ENCODE measurements at regions of chr3 and their contacts with region 1.

Region 1: DNA sequence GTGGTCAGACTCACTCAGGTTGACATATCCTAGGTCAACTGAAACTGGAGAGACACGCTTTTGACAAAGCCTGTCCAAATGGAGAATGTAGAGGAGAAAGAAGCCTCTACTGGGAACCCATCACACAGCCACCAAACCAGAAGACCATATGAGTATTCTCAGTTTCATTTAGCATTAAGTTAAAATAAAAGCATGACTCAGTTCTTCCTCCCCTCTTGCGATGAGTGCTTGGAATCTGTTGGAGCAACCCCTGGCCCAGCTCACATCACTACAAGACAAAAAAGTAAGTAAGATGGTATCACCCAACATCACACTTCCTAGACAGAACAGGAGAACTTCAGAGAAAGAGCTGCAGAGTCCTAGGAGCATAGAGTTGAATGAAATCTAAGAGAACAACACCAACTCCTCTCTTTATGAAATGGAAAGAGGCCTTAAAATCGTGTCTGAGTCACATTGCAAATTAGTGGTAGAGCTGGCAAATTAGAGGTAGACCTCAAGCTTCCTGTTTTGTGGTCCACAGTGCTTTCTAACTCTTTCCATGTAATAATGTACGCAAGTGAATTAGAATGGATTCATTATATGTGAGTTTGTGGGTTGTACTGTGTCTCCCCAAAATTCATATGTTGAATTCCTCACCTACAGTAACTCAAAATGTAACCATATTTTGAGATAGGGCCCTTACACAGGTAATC is 51.2 kb downstream of the FGF12 start:
- DNase-seq: peak; percentile 57
- H3K4me3 Mint-ChIP-seq: peak overlapping the region; percentile 36
- H3K27ac Mint-ChIP-seq: peak overlapping the region; percentile 94
- H3K4me1 Mint-ChIP-seq: peaks cover 7% of the 10 kb centered on the region
- H3K27me3 Mint-ChIP-seq: peaks cover 14% of the 10 kb centered on the region

Region 2: DNA sequence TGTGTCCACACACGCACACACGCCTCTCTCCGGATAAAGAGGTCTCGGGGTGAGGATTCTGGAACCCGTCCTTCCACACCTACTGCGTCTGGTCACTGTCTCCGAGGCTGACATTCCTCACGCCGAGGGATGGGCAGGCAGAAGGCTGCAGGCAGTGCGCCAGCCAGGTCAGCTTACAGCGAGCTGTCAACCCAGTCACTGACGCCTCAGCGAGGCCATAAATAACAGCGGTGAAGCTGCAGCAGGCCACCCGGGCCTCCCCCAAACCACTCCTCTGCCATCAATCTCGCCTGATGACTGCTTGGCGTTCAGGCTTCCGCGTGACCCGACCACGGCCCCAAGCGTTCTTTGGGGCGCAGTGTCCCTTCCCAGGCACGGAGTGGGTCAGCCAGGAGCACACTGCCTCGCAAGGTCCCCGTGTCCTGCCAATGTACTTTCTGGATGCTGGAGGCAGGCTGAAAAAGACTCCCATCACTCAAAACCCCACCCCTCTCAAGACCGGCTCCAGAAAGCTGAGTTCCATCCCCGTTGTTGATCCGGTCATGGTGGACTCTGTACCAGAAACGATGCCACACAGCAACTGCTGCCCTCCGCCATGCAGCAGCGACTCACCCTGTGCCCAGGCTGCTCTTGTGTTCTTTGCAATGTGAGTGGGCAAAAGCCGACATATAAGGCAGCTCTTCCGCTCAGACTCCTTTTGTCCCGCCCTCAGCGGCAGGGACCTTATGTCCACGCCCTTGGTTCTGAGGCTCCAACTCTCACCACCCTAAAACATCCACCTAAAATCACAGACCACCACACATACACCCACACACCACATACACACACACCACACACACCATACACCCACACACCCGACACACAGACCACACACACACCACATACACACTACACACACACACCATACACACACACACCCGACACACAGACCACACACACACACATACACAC is 1648.0 kb after region 1 on chr3:
- intact Hi-C with region 1: loop called (anchors 10 kb)
- DNase-seq: peak; percentile 76
- H3K4me3 Mint-ChIP-seq: no peak overlapping the region
- H3K27ac Mint-ChIP-seq: no peak overlapping the region
- H3K4me1 Mint-ChIP-seq: peaks cover 4% of the 10 kb centered on the region
- H3K27me3 Mint-ChIP-seq: peaks cover 18% of the 10 kb centered on the region

Measured in activated CD4-positive, alpha-beta T cell treated with anti-CD3 and anti-CD28 coated beads, Interleukin-2, amount 10 ng/mL, durations not matched to agents 24 days and 14 days (primary cell).